Gastrocnemius medialis (tissue), 4 donors: ENCODE measurements at regions of chr7 and their contacts with region 1.

Region 1: GRCh38 chr7:100803398-100804233 is 23.7 kb downstream of the EPHB4 start:
- DNase-seq: peak; percentile 32 to 44
- ATAC-seq: peak; percentile 82 to 84
- H3K4me3 ChIP-seq: no peak overlapping the region
- H3K27ac ChIP-seq: peak overlapping the region in 1 of 4 donors; percentile 22
- H3K4me1 ChIP-seq: peaks cover 9 to 11% of the 10 kb centered on the region in 2 donors
- H3K27me3 ChIP-seq: peaks cover 3 to 12% (median 10%) of the 10 kb centered on the region in 3 donors
- CTCF ChIP-seq: no peak
- POLR2A ChIP-seq: no peak

Region 2: GRCh38 chr7:100509231-100509630 is 294.4 kb before region 1 on chr7:
- in situ Hi-C with region 1: no loop called
- intact Hi-C with region 1: no loop called
- DNase-seq: no peak
- ATAC-seq: no peak
- H3K4me3 ChIP-seq: no peak overlapping the region
- H3K27ac ChIP-seq: no peak overlapping the region
- H3K4me1 ChIP-seq: no peaks in the 10 kb centered on the region
- H3K27me3 ChIP-seq: peaks cover 4 to 11% (median 5%) of the 10 kb centered on the region in 3 donors
- CTCF ChIP-seq: no peak
- POLR2A ChIP-seq: no peak

Region 3: DNA sequence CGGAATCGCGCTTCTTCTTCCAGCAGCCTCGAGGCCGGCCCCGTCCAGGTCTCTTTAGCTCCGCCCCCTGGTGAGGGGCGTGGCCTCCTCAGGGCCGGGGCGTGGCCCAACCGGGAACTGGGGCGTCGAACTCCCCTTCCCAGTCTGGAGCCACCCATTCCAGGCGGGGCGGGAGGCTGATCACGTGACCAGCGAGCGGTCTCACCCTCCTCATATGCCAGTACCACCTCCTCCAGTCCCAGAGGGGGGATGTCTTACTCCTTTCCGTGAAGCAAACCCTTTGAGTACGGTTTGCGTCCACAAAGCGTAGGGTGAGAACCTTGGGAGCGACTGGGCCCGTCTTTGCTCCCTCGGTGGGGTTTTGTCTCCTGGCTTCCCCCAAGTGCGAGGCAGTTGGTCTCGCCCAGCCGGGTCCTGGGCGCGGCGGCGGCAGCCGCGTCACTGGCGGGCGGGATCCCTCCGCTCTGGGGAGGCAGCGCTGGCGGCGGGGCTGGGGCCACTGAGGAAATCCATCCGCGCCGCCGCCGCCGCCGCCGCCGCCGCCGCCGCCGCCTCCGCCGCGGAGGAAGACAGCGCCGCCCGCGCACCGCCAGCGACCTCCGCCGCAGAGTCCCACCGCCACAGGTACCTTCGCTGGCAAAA is 130.2 kb before region 1 on chr7 and contains the start of gene GNB2:
- in situ Hi-C with region 1: no loop called
- intact Hi-C with region 1: no loop called
- DNase-seq: peak; percentile 98 to 99
- ATAC-seq: peak; percentile 90
- H3K4me3 ChIP-seq: peak within 1 kb of the TSS; percentile 95 to 100 (median 97)
- H3K27ac ChIP-seq: peak within 1 kb of the TSS; percentile 96 to 100 (median 99)
- H3K4me1 ChIP-seq: peaks cover 0 to 8% of the 10 kb centered on the region in 2 donors
- H3K27me3 ChIP-seq: no peaks in the 10 kb centered on the region
- CTCF ChIP-seq: peak in 2 of 5 experiments; percentile 43 to 53
- POLR2A ChIP-seq: peak; percentile 83 to 87
- total RNA-seq, gene GNB2: 108 to 163 (median 129) TPM

Region 4: DNA sequence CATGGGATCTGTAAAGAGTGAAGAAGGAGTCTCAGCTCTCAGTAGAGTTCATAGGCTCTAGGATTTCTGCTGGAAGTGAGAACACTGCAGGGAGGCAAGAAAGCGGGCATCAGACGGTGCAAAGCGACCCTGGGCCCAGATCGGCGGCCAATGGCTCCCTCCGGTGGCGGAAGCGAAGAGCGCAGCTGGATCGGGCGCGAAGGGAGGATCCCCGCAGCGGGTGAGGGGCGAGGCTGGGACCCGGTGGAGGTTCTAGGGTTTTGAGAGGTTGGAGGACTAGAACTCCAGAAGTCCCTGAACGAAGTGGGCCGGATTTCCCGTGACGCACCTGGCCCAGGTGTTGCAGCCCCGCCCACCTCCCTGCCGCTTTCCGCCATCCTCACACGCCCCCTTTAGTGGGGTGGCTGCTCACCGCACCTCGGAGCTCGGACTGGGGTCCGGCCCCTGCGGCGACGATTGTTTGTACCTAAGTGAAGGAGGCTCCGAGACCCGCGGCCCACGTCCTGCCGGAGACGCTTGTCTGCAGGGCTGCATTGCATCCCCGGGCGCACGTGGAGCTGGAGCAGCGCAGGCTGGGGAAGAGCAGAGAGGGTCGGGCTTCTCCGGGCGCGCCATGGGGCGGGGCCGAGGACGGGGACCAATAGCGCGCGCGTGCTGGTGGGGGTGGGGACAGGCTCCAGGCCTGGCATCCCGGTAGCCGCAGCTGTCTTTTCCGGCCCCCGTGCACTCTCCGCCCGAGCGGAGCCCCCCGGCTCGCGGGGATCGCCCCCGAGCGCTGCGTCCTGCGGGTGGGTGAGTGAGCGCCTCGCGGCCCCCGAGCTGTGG is 48.6 kb after region 1 on chr7 and contains the start of gene SLC12A9:
- in situ Hi-C with region 1: loop called in 1 of 4 experiments (anchors 5 kb)
- intact Hi-C with region 1: loop called (anchors 2 kb)
- DNase-seq: peak; percentile 70 to 76
- ATAC-seq: peak; percentile 87 to 95
- H3K4me3 ChIP-seq: peak within 1 kb of the TSS; percentile 64 to 71 (median 69)
- H3K27ac ChIP-seq: peak within 1 kb of the TSS; percentile 38 to 77 (median 58)
- H3K4me1 ChIP-seq: peaks cover 7 to 16% of the 10 kb centered on the region in 2 donors
- H3K27me3 ChIP-seq: no peaks in the 10 kb centered on the region
- CTCF ChIP-seq: peak; percentile 78 to 90 (median 84)
- POLR2A ChIP-seq: peak in 1 of 2 donors; percentile 22
- total RNA-seq, gene SLC12A9: 2.5 to 4.3 (median 3.8) TPM